ENCODE measurements at regions of chr6 and their contacts with region 1.

Region 1: GRCh38 chr6:42211726-42212125 is 5.9 kb downstream of the MRPS10 start:
- H3K4me3 ChIP-seq: no peak overlapping the region
- H3K27ac ChIP-seq: no peak overlapping the region
- H3K4me1 ChIP-seq: peaks cover 12% of the 10 kb centered on the region
- CTCF ChIP-seq: no peak

Region 2: DNA sequence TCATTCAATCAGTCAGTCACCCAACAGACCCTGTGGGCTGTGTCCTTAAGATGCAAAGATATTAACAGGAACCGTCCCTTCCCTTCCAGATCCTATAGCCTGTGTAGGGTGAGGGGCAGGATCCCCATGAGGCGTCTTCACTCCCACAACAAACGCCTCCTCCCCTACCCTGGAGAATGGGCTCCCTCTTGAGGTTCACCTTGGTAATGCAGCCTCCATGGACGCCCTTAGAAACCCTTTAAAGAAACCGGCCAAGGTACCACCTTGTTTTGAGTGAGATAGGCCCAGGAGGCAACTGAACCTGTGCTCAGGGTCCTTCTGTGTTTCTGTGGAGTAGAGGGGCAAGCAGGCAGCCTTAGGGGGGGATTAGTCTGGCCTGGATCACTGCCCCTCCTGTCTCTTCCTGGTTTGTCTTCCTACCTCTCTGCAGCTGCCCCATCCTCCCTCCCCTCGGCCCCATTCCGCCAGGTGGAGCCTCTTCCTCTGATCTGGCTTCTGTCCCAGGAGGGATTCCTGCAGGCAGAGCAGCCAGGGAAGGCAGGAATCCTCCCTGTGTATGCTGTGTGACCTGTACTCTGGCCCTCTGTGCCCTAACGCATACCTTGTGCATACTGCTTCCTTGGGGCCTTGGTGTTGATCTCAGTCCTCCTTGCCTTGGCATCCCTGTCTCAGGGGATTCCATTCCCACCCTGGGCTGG is 45.1 kb before region 1 on chr6:
- CTCF ChIA-PET with region 1: interaction called, 46 read pairs
- POLR2A ChIA-PET with region 1: interaction called, 4 read pairs
- H3K4me3 ChIP-seq: no peak overlapping the region
- H3K27ac ChIP-seq: no peak overlapping the region
- H3K4me1 ChIP-seq: no peaks in the 10 kb centered on the region
- CTCF ChIP-seq: peak; percentile 86

Region 3: GRCh38 chr6:42200035-42200434 is 11.7 kb before region 1 on chr6:
- CTCF ChIA-PET with region 1: interaction called, 40 read pairs
- POLR2A ChIA-PET with region 1: interaction called, 6 read pairs
- H3K4me3 ChIP-seq: no peak overlapping the region
- H3K27ac ChIP-seq: no peak overlapping the region
- H3K4me1 ChIP-seq: no peaks in the 10 kb centered on the region
- CTCF ChIP-seq: no peak

Region 4: DNA sequence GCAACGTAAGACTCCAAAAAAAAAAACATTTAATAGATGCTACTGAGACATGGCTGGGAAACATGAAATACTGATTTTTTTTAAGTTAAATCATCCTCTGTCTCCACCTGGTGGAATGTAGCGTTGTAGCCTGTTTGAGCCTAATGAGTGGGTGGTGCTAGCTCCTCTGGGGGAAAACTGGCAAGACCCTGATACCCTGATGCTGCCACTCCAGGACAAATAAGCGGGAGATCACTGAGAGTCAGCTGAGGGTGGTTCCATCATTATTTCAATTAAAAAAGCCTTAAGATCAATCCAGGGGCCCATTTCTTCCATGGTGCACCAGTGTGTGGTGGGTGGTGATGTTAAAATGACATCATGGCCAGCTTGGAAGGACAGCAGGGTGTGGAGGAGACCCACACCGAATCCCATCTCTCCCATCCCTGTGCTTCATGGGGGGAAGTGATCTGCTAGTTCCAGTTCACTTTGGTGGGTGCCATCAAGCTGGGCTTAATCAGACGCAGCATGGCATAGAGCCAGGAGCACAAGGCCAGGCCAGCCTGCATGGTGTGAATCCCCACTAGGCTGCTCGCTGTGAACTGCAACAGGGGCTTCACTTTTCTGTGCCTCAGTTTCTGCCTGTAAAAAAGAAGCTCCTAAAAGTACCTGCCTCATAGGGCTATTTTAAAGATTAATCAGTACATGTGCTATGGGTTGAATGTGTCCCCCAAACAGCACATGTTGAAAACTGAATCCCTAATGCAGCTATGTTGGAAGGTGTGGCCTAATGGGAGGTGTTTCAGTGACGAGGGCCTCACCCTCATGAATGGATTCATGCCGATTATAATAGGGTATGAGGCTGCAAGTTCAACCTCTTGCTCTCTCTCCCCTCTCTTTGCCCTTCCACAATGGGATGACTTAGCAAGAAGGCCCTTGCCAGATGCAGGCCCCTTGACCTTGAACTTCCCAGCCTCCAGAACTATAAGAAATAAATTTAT is 18.9 kb after region 1 on chr6:
- CTCF ChIA-PET with region 1: interaction called, 46 read pairs
- POLR2A ChIA-PET with region 1: interaction called, 5 read pairs
- H3K4me3 ChIP-seq: no peak overlapping the region
- H3K27ac ChIP-seq: no peak overlapping the region
- H3K4me1 ChIP-seq: peaks cover 14% of the 10 kb centered on the region
- CTCF ChIP-seq: peak; percentile 60; the same call in 1 of the 2 replicates

Measured in HEK293 (cell line).